HCT116 (cell line): ENCODE measurements at regions of chr4 and their contacts with region 1.

Region 1: DNA sequence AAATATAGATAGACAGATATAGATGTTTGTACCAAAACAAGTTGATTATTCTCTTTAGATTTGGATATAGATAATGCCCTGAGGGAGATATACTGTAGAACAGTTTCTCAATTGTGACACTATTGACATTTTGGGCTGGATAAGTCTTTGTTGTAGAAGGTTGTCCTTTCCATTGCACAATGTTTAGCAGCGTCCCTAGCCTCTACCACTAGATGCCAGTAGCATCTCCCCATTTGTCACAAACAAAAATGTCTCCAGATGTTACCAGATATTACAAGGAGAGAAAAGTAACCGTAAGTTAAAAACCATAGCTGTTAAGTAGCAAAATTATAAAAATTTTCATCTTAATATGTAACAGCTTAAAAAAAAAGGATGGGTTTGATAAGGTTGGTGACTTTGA is 2595.3 kb downstream of the ARAP2 start:
- DNase-seq: peak; percentile 21
- ATAC-seq: peak; percentile 71
- H3K4me3 ChIP-seq: no peak overlapping the region
- H3K27ac ChIP-seq: no peak overlapping the region
- H3K4me1 ChIP-seq: no peaks in the 10 kb centered on the region
- H3K27me3 ChIP-seq: no peaks in the 10 kb centered on the region
- CTCF ChIP-seq: peak; percentile 27 to 77 (median 74); a peak in 5 of 6 replicates
- POLR2A ChIP-seq: no peak
- RAD21 ChIP-seq: peak; percentile 72

Region 2: DNA sequence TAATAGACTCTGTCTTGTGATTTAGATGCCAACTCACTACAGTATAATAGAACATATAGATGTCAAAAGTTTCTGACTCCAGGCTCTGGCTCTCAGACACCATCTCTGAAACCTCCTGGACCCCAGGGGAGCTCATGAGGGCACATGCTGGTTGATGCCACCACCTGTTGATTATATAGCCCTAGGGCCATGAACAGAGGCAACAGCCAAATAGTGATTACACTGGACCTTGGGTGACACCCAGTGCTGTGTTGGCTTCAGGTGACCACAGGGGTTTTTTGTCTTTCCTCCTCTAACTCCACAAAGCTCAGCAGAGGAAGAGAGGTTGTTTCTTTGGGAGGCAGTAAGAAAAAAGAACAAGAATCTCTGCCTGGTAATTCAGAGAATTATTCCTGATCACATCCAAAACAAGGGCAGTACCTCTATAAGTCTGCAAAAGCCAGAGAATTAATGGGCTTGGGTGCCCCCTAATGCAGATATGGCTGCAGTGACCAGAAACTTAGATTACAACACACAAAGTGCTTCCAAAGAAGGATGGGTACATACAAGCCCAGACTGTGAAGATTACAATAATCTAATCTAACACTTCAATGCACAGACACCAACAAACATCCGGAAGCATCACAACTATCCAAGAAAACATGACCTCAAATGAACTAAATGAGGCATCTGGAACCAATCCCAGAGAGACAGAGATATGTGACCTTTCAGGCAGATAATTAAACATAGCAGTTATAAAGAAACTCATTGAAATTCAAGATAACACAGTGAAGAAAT is 674.7 kb after region 1 on chr4:
- CTCF ChIA-PET with region 1: interaction called, 3 read pairs
- POLR2A ChIA-PET with region 1: no interaction called
- RAD21 ChIA-PET with region 1: no interaction called
- intact Hi-C with region 1: loop called (anchors 10 kb)
- DNase-seq: no peak
- ATAC-seq: peak; percentile 42
- H3K4me3 ChIP-seq: no peak overlapping the region
- H3K27ac ChIP-seq: no peak overlapping the region
- H3K4me1 ChIP-seq: no peaks in the 10 kb centered on the region
- H3K27me3 ChIP-seq: no peaks in the 10 kb centered on the region
- CTCF ChIP-seq: no peak; a peak in 2 of 6 replicates
- POLR2A ChIP-seq: no peak
- RAD21 ChIP-seq: peak; percentile 36; the same call in 1 of the 2 replicates

Region 3: GRCh38 chr4:34720571-34720970 is 1071.6 kb after region 1 on chr4:
- CTCF ChIA-PET with region 1: interaction called, 6 read pairs
- POLR2A ChIA-PET with region 1: no interaction called
- RAD21 ChIA-PET with region 1: no interaction called
- intact Hi-C with region 1: loop called (anchors 1 kb)
- DNase-seq: peak; percentile 27
- ATAC-seq: no peak
- H3K4me3 ChIP-seq: no peak overlapping the region
- H3K27ac ChIP-seq: no peak overlapping the region
- H3K4me1 ChIP-seq: no peaks in the 10 kb centered on the region
- H3K27me3 ChIP-seq: no peaks in the 10 kb centered on the region
- CTCF ChIP-seq: peak; percentile 25 to 64 (median 40); a peak in 4 of 6 replicates
- POLR2A ChIP-seq: no peak
- RAD21 ChIP-seq: peak; percentile 69